ENCODE measurements at regions of chr6 and their contacts with region 1.

Region 1: DNA sequence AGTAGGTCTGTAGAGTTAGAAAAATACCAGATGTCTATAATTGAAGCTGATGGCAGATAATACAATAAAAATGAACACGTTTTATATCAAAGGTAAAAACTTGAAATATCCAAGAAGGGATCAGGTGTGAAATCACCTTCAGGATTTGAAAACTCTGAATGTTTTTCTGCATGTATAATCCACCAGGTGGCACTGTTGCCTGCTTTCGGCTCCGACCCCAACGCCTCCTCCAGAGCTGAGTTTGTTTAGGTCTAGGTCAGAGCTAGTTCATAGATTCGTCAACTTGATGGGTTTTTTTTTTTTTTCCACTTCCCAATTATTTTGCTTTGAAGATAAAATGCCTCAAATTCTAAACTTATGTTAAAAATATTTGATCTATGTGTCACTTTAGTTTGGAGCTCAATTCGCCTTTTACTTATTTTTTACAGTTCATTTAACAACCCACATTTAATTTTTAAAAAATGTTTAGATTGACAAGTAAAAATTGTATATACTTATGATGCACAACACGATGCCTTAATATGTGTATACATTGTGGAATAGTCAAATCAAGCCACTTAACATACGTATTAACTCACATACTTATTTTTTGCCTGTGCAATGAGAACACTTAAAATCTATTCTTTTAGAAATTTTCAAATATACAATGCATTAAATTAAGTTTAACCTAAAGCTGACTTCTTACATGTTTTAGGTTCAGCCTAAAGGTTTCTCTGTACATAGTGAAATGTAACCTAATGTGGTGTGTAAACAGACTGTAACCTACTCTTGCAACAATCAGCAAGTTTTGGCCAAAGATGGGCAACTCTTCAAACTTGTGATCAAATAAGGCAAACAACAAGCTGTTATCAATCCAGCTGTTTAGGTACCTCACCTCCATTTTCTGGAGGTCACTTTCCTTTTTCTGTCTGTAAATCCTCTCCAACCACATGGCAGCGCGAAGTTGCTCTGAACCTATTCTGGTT is 39.4 kb upstream of the ENPP4 start:
- DNase-seq: peak; percentile 76
- ATAC-seq: peak; percentile 70
- H3K4me3 Mint-ChIP-seq: no peak overlapping the region
- H3K27ac Mint-ChIP-seq: no peak overlapping the region
- H3K4me1 Mint-ChIP-seq: peaks cover 4% of the 10 kb centered on the region
- H3K27me3 Mint-ChIP-seq: peaks cover 24% of the 10 kb centered on the region
- CTCF ChIP-seq: peak; percentile 84

Region 2: DNA sequence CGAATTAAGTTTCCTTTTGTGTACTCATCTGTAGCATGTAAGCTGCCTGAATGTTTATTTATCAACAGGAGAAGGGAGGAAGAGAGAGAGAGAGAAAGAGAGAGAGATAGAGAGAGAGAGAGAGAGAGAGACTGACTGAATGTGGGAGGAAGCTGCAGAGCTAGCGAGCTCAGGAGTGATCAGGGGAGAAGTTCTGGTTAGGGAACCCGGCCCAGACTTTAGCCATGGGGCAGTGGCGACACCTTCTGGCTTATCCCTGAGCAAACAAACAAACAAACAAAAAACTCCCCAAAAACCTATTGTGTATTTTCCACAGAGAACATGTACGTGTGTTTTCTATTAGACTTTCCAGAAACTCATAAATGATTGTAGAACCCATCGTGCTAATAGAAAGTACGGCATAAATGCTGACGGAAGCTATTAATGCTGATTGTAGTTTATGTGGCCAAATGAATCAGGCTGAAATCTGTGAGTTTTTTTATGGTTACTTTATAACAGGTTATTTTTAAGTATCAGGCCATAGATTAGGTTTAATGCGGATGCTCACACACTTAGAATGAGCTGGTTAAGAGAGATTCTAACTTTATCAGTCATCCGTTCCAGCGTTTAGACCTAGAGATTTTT is 167.6 kb before region 1 on chr6:
- CTCF ChIA-PET with region 1: no interaction called
- POLR2A ChIA-PET with region 1: no interaction called
- intact Hi-C with region 1: no loop called
- DNase-seq: peak; percentile 77
- ATAC-seq: peak; percentile 20
- H3K4me3 Mint-ChIP-seq: no peak overlapping the region
- H3K27ac Mint-ChIP-seq: peak overlapping the region; percentile 55
- H3K4me1 Mint-ChIP-seq: peaks cover 46% of the 10 kb centered on the region
- H3K27me3 Mint-ChIP-seq: peaks cover 2% of the 10 kb centered on the region
- CTCF ChIP-seq: peak; percentile 82

Region 3: GRCh38 chr6:46080111-46080510 is 10.3 kb before region 1 on chr6:
- CTCF ChIA-PET with region 1: interaction called, 24 read pairs
- POLR2A ChIA-PET with region 1: no interaction called
- intact Hi-C with region 1: no loop called
- DNase-seq: no peak
- ATAC-seq: no peak
- H3K4me3 Mint-ChIP-seq: no peak overlapping the region
- H3K27ac Mint-ChIP-seq: no peak overlapping the region
- H3K4me1 Mint-ChIP-seq: peaks cover 4% of the 10 kb centered on the region
- H3K27me3 Mint-ChIP-seq: peaks cover 1% of the 10 kb centered on the region
- CTCF ChIP-seq: no peak

Region 4: GRCh38 chr6:46207174-46207573 is 116.8 kb after region 1 on chr6:
- CTCF ChIA-PET with region 1: interaction called, 10 read pairs
- POLR2A ChIA-PET with region 1: no interaction called
- intact Hi-C with region 1: no loop called
- DNase-seq: no peak
- ATAC-seq: no peak
- H3K4me3 Mint-ChIP-seq: no peak overlapping the region
- H3K27ac Mint-ChIP-seq: no peak overlapping the region
- H3K4me1 Mint-ChIP-seq: no peaks in the 10 kb centered on the region
- H3K27me3 Mint-ChIP-seq: no peaks in the 10 kb centered on the region
- CTCF ChIP-seq: no peak

Region 5: GRCh38 chr6:46243754-46244153 is 153.4 kb after region 1 on chr6:
- CTCF ChIA-PET with region 1: interaction called, 10 read pairs
- POLR2A ChIA-PET with region 1: no interaction called
- intact Hi-C with region 1: no loop called
- DNase-seq: no peak
- ATAC-seq: no peak
- H3K4me3 Mint-ChIP-seq: no peak overlapping the region
- H3K27ac Mint-ChIP-seq: no peak overlapping the region
- H3K4me1 Mint-ChIP-seq: no peaks in the 10 kb centered on the region
- H3K27me3 Mint-ChIP-seq: peaks cover 3% of the 10 kb centered on the region
- CTCF ChIP-seq: no peak